ENCODE measurements at regions of chr15 and their contacts with region 1.

Region 1: DNA sequence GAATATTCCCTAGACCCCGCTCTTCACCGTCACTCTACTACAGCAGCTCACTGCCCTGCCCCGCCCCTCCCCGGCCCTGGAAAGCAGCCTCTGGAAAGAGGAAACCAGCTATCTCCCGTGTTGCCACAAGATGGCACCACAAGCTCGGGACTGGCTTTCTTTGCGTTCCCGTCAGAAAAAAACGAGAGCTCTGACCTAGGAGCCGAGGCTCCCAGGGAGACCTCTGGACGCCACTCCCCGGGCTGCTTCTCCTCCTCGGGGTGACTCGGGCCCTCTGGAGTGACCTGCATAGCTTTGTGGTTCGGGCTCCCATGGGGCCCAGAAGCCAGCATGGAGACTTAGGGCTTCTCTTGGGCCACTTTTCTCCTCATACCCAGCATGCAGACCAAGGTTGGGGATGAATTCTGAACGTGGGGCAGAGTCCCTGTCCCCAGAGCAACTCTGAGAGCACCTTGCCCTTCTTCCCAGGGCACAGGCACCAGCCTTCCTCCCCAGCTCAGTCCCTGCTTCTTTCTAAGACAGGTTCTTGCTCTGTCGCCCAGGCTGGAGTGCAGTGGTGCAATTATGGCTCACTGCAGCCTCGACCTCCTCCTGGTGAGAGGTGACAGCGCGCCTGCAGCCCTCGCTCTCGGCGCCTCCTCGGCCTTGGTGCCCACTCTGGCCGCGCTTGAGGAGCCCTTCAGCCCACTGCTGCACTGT is 19.0 kb downstream of the STOML1 start:
- DNase-seq: peak; percentile 59 to 81 (median 65)
- H3K4me3 ChIP-seq: no peak overlapping the region
- H3K4me3 Mint-ChIP-seq: peak overlapping the region in 2 of 7 donors; percentile 20 to 37
- H3K27ac ChIP-seq: no peak overlapping the region
- H3K27ac Mint-ChIP-seq: no peak overlapping the region
- H3K4me1 ChIP-seq: peaks cover 4% of the 10 kb centered on the region
- H3K4me1 Mint-ChIP-seq: peaks cover 4 to 19% (median 16%) of the 10 kb centered on the region in 3 donors
- H3K27me3 ChIP-seq: no peaks in the 10 kb centered on the region
- H3K27me3 Mint-ChIP-seq: peaks cover 26 to 28% of the 10 kb centered on the region in 2 donors

Region 2: DNA sequence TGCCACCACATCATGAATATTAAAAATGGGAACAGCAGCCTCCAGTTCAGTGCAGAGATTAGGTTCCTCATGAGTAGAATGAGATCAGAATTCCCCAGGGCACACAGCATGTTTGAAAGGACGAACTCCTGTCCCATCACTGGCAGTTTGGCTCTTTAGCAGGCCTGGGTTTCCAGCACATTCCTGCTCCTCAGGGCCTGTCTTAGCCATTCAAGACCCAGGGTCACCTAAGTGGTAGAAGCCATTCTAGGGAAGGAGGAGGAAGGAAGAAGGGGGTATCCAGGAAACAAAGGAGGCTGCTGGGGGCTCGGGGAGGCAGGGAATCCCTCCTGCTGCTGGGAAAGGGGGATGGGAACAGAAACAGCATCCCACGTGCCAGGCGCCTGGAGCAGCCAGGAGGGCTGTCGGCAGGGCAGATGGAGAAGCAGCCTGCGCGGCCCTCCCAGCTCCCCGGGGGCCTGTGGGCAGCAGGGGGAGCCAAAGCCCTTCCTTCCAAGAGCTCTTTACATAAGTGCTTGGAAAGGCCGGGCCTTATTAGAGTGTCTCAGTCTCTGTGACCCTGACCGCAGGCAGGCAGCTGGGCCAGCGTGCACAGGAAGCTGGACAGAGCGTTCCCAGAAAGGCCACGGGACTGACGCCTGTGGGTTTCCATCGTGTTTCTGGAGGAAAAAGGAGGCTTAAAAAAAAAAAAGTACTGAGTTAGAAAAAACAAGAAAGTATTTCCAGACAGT is 22.1 kb before region 1 on chr15:
- CTCF ChIA-PET with region 1: interaction called, 71 read pairs
- POLR2A ChIA-PET with region 1: no interaction called
- DNase-seq: peak; percentile 47 to 82 (median 57)
- H3K4me3 ChIP-seq: no peak overlapping the region
- H3K4me3 Mint-ChIP-seq: no peak overlapping the region
- H3K27ac ChIP-seq: no peak overlapping the region
- H3K27ac Mint-ChIP-seq: peak overlapping the region in 6 of 8 donors; percentile 41 to 90 (median 80)
- H3K4me1 ChIP-seq: no peaks in the 10 kb centered on the region
- H3K4me1 Mint-ChIP-seq: peaks cover 4 to 8% (median 6%) of the 10 kb centered on the region in 3 donors
- H3K27me3 ChIP-seq: no peaks in the 10 kb centered on the region
- H3K27me3 Mint-ChIP-seq: peaks cover 0 to 9% of the 10 kb centered on the region in 2 donors

Region 3: DNA sequence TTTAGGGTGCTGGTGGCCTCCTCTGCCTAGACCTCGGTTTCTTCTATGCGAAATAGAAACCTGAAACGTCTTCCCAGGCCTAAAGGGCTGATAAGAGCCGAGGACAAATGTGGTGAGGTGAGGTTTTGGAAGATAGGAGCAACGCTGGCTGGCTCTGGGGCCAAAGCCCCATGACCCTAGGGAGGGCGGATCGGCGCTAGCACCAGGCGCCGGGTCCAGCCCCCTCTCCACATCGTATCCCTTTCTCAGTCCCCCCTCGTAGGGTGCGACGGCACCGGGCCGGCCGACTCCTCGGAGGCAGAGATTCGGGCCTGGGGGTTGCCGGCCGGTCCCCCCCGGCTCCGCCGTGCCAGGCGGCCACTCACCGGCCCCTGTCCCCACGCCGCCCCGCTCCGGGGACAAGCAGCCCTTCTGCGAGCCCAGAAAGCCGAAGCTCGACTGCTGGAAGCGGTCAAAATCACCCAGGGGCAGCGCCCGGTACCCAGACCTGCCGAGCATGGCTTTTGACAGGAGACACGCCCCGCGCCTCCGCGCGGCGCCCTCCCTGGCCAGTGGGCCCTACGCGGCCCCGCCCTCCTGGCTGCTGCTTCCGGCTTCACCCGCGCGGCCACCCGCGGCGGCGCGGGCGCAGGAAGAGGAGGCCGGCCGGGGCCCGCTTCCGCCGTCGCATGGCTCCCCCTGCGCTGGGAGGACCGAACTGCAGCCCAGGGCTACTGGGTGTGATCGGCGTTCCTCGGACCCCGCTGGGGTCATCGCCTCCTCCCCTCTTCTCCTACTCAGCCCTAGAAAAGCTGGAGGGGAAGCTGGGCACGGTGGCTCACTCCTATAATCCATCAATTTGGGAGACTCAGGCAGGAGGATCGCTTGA is 18.8 kb after region 1 on chr15 and contains the start of gene STOML1:
- CTCF ChIA-PET with region 1: interaction called, 34 read pairs
- POLR2A ChIA-PET with region 1: interaction called, 3 read pairs
- DNase-seq: peak; percentile 89 to 94 (median 91)
- H3K4me3 ChIP-seq: peak within 1 kb of the TSS; percentile 69
- H3K4me3 Mint-ChIP-seq: peak within 1 kb of the TSS; percentile 77 to 92 (median 79)
- H3K27ac ChIP-seq: peak within 1 kb of the TSS; percentile 67
- H3K27ac Mint-ChIP-seq: peak within 1 kb of the TSS in 7 of 8 donors; percentile 50 to 96 (median 68)
- H3K4me1 ChIP-seq: peaks cover 36% of the 10 kb centered on the region
- H3K4me1 Mint-ChIP-seq: peaks cover 36 to 50% (median 45%) of the 10 kb centered on the region in 3 donors
- H3K27me3 ChIP-seq: no peaks in the 10 kb centered on the region
- H3K27me3 Mint-ChIP-seq: no peaks in the 10 kb centered on the region
- total RNA-seq, gene STOML1: 13.2 to 13.3 TPM

Region 4: GRCh38 chr15:74050556-74051234 is 77.6 kb after region 1 on chr15:
- CTCF ChIA-PET with region 1: interaction called, 17 read pairs
- POLR2A ChIA-PET with region 1: no interaction called
- DNase-seq: no peak
- H3K4me3 ChIP-seq: no peak overlapping the region
- H3K4me3 Mint-ChIP-seq: no peak overlapping the region
- H3K27ac ChIP-seq: no peak overlapping the region
- H3K27ac Mint-ChIP-seq: peak overlapping the region in 3 of 8 donors; percentile 5 to 73 (median 54)
- H3K4me1 ChIP-seq: peaks cover 13% of the 10 kb centered on the region
- H3K4me1 Mint-ChIP-seq: peaks cover 19 to 29% (median 27%) of the 10 kb centered on the region in 3 donors
- H3K27me3 ChIP-seq: no peaks in the 10 kb centered on the region
- H3K27me3 Mint-ChIP-seq: peaks cover 0 to 3% of the 10 kb centered on the region in 2 donors

Measured in CD8-positive, alpha-beta memory T cell (primary cell).